HepG2 (cell line): ENCODE measurements at regions of chr2 and their contacts with region 1.

Region 1: GRCh38 chr2:121530212-121530705 is 421 bp upstream of the RNU4ATAC start:
- DNase-seq: peak; percentile 87
- ATAC-seq: peak; percentile 91
- H3K4me3 ChIP-seq: peak overlapping the region; percentile 77 to 91 (median 83)
- H3K27ac ChIP-seq: peak overlapping the region; percentile 98
- H3K4me1 ChIP-seq: peaks cover 68% of the 10 kb centered on the region
- H3K27me3 ChIP-seq: no peaks in the 10 kb centered on the region
- CTCF ChIP-seq: no peak
- EP300 ChIP-seq: no peak
- POLR2A ChIP-seq: peak in 1 of 2 experiments; percentile 63; a peak in 2 of 4 replicates
- RAD21 ChIP-seq: no peak; the same call in 1 of the 2 replicates

Region 2: GRCh38 chr2:121400201-121400600 is 130.1 kb before region 1 on chr2:
- CTCF ChIA-PET with region 1: no interaction called
- POLR2A ChIA-PET with region 1: no interaction called
- in situ Hi-C with region 1: no loop called
- intact Hi-C with region 1: loop called (anchors 2 kb)
- DNase-seq: no peak
- ATAC-seq: no peak
- H3K4me3 ChIP-seq: no peak overlapping the region
- H3K27ac ChIP-seq: no peak overlapping the region
- H3K4me1 ChIP-seq: no peaks in the 10 kb centered on the region
- H3K27me3 ChIP-seq: no peaks in the 10 kb centered on the region
- CTCF ChIP-seq: no peak
- EP300 ChIP-seq: no peak
- POLR2A ChIP-seq: no peak
- RAD21 ChIP-seq: no peak

Region 3: DNA sequence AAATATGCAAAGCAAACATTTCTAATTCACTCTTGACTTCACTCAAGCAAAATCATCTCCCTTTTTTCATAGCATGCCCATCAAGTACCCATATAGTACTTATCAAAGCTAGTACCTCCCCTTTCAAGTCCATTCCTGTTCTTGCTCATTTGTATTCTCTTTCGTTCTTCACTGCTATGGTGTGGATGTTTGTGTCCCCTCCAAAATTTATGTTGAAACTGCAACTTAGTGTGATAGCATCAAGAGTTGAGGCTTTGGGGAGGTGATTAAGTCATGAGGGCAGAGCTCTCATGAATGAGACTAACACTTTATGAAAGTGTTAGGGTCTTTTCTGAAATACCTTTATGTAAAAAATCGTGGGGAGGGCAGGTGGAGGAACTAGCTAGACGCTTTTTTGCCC is 53.3 kb after region 1 on chr2:
- CTCF ChIA-PET with region 1: no interaction called
- POLR2A ChIA-PET with region 1: interaction called, 5 read pairs
- in situ Hi-C with region 1: no loop called
- intact Hi-C with region 1: loop called (anchors 1 kb)
- DNase-seq: no peak
- ATAC-seq: no peak
- H3K4me3 ChIP-seq: no peak overlapping the region
- H3K27ac ChIP-seq: no peak overlapping the region
- H3K4me1 ChIP-seq: peaks cover 27% of the 10 kb centered on the region
- H3K27me3 ChIP-seq: no peaks in the 10 kb centered on the region
- CTCF ChIP-seq: no peak
- EP300 ChIP-seq: no peak
- POLR2A ChIP-seq: no peak
- RAD21 ChIP-seq: no peak

Region 4: DNA sequence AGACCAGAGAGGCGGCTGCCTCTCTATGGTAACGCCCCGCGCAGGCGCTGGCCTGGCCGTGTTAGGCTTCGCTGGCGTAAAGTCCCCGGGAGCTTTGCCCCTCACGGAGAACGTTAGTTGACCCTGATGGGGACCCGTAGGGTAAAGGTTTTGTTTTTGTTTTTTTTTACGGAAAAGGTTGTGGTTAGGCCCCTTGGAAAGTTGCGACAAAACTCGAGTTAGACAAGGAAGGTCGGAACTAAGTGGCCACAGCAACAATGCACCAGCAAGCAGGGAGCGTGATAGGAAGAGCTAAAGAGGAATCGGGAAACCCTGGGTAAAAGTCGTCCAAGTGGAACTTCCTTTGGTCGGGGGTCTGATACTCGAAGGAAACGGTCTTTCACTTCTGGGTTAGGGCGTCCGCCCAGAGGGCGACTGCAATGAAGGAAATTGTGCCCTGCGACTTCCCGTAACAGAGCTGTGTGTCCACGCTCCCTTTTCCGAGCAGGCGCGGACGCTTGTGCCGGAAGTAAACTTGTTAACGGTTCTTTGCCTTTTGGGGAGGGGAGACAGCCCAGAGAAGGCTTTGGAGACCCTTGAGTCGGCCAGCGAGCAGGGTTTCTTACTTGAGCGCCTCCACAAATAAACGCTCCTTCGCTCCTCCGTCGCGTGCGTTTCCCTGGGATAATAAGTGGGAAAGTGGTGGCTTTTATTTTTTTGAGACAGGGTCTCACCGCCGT is 119.5 kb after region 1 on chr2:
- CTCF ChIA-PET with region 1: no interaction called
- POLR2A ChIA-PET with region 1: interaction called, 119 read pairs
- in situ Hi-C with region 1: loop called (anchors 5 kb)
- intact Hi-C with region 1: loop called (anchors 1 kb)
- DNase-seq: peak; percentile 98
- ATAC-seq: peak; percentile 96
- H3K4me3 ChIP-seq: peak overlapping the region; percentile 71 to 96 (median 95)
- H3K27ac ChIP-seq: peak overlapping the region; percentile 99
- H3K4me1 ChIP-seq: peaks cover 53% of the 10 kb centered on the region
- H3K27me3 ChIP-seq: no peaks in the 10 kb centered on the region; a peak in 2 of 5 replicates
- CTCF ChIP-seq: no peak; the same call in 1 of the 2 replicates
- EP300 ChIP-seq: 0 out of 4 replicates have a peak, but pooled peaks have one; percentile 14 to 28
- POLR2A ChIP-seq: peak; percentile 66 to 92
- RAD21 ChIP-seq: peak; percentile 20; the same call in 1 of the 2 replicates

Region 5: GRCh38 chr2:121699421-121700333 is 169.4 kb after region 1 on chr2:
- CTCF ChIA-PET with region 1: no interaction called
- POLR2A ChIA-PET with region 1: interaction called, 36 read pairs
- in situ Hi-C with region 1: no loop called
- intact Hi-C with region 1: no loop called
- DNase-seq: peak; percentile 52
- ATAC-seq: peak; percentile 75
- H3K4me3 ChIP-seq: peak overlapping the region; percentile 33 to 67 (median 41)
- H3K27ac ChIP-seq: no peak overlapping the region
- H3K4me1 ChIP-seq: peaks cover 54% of the 10 kb centered on the region
- H3K27me3 ChIP-seq: no peaks in the 10 kb centered on the region; a peak in 1 of 5 replicates
- CTCF ChIP-seq: no peak
- EP300 ChIP-seq: no peak
- POLR2A ChIP-seq: no peak
- RAD21 ChIP-seq: no peak

Region 6: DNA sequence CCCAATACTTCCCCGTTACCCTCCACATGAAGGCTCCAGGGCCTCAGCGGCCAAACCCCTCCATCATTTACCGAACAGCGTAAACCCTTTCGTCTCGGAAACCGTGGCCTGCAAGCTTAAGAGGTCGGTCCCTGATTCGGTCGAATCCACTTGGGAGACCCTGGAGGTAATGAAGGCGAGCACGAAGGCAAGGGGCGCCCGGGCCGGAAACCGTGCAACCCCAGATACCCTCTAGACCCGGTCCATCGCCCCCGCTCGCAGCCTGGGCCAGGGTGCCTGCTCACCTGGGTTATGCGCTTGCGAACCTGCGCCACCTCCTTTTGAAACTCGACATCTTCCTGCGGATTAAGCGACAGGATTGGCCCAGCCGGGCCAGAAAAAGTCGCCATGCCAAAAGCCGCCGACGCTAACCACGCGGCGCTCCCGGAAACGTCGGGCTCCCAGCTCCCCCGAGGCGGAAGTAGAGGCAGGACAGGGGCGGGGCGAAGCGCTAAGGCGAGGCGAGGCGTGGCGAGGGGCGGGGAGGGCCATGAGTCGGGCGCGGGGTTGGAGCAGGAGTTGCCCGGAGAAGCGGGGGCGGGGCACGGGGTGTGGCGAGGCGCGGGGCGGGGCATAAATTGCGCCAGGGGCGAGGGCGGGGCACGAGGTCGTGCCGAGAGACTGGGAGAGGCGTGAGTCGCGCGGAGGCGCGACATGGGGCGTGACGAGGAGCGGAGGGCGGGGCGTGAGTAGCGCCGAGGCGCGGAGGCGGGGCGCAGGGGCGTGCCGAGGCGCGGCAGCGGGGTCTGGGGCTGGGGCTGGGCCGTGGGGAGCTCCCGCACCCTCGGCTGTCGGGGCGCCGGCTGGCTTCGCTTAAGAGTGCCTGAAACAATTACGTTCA is 206.4 kb after region 1 on chr2 and contains the start of gene NIFK:
- CTCF ChIA-PET with region 1: no interaction called
- POLR2A ChIA-PET with region 1: interaction called, 44 read pairs
- in situ Hi-C with region 1: no loop called
- intact Hi-C with region 1: loop called (anchors 5 kb)
- DNase-seq: peak; percentile 96
- ATAC-seq: peak; percentile 95
- H3K4me3 ChIP-seq: peak within 1 kb of the TSS; percentile 87 to 100 (median 91)
- H3K27ac ChIP-seq: peak within 1 kb of the TSS; percentile 66
- H3K4me1 ChIP-seq: peaks cover 27% of the 10 kb centered on the region
- H3K27me3 ChIP-seq: peaks cover 2 to 25% of the 10 kb centered on the region in 2 experiments; a peak in 2 of 5 replicates
- CTCF ChIP-seq: no peak; the same call in none of the 2 replicates
- EP300 ChIP-seq: peak in 1 of 2 experiments; percentile 7; a peak in 1 of 4 replicates
- POLR2A ChIP-seq: peak; percentile 75 to 84
- RAD21 ChIP-seq: peak; percentile 37
- total RNA-seq, gene NIFK: 105 and 178 TPM in 2 replicates